Heart right ventricle (tissue), 16 donors: ENCODE measurements at regions of chr2 and their contacts with region 1.

Region 1: DNA sequence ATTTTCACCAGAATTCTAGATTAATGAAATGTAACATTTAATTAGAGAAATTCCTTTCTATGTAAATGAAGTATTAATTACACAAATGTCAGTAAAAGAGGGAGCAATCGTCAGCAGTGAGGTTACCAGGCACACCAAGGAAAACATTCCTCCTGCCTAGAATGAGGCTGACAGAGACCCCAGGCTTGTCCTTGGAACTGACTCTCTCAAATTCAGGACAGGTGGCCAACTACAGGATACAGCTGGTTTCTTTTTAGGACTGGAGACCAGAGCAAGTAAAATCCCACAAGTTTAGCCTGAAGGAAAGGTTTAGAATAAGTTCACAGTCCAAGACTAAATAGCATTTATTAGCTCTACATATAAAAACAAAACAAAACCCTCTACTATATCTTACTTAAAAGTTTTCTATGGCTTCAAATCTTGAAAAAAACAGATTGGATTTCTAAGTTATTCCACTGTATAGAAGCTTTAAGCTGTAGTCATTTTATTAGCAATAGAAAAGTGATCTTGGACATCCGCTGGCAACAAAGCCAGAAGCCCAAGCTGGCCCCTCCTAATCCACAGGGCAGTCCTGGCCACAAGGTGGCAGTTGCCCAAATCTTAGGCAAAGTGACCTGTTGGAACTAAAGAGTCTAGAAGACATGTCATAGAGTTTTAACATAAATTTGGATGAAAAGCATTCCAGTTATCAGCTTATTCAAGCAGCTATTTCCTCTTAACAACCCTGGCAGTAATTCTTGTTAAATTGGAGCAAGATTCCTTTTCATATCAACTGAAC is 81.0 kb downstream of the SP3 start:
- DNase-seq: peak; percentile 47 to 48
- ATAC-seq: peak in 7 of 8 donors; percentile 42 to 81 (median 70)
- H3K4me3 ChIP-seq: no peak overlapping the region
- H3K27ac ChIP-seq: no peak overlapping the region
- H3K4me1 ChIP-seq: peaks cover 0 to 14% (median 6%) of the 10 kb centered on the region in 9 donors
- H3K27me3 ChIP-seq: peaks cover 0 to 3% (median 0%) of the 10 kb centered on the region in 7 donors
- CTCF ChIP-seq: peak; percentile 28 to 80 (median 70)

Region 2: GRCh38 chr2:172516299-172516698 is 1367.9 kb before region 1 on chr2:
- intact Hi-C with region 1: loop called in 1 of 10 experiments (anchors 5 kb)
- DNase-seq: no peak
- ATAC-seq: no peak
- H3K4me3 ChIP-seq: no peak overlapping the region
- H3K27ac ChIP-seq: no peak overlapping the region
- H3K4me1 ChIP-seq: no peaks in the 10 kb centered on the region
- H3K27me3 ChIP-seq: no peaks in the 10 kb centered on the region
- CTCF ChIP-seq: no peak

Region 3: DNA sequence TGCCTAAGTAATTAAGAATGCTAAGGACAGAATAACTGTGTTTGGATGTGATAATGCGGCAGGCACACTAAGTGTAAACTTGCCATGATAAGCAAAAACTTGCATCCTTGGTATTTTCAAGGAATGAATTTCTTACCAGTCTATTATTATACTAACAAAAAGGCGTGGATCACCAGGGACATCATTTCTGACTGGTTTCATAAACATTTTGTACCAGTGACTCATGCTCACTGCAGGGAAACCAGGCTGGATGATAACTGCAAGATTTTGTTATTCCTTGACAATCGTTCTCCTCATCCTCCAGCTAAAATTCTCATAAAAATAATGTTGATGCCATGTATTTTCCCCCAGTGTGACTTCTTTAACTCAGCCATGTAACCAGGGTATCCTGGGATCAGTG is 240.1 kb before region 1 on chr2:
- intact Hi-C with region 1: no loop called
- DNase-seq: no peak
- ATAC-seq: no peak
- H3K4me3 ChIP-seq: no peak overlapping the region
- H3K27ac ChIP-seq: no peak overlapping the region
- H3K4me1 ChIP-seq: no peaks in the 10 kb centered on the region
- H3K27me3 ChIP-seq: no peaks in the 10 kb centered on the region
- CTCF ChIP-seq: no peak

Region 4: GRCh38 chr2:174051741-174052583 is 167.7 kb after region 1 on chr2:
- intact Hi-C with region 1: loop called in 6 of 10 experiments (anchors 5 to 10 kb)
- DNase-seq: no peak
- ATAC-seq: peak; percentile 70 to 93 (median 80)
- H3K4me3 ChIP-seq: peak overlapping the region in 1 of 10 donors; percentile 3
- H3K27ac ChIP-seq: peak overlapping the region in 5 of 10 donors; percentile 16 to 47 (median 39)
- H3K4me1 ChIP-seq: peaks cover 0 to 30% (median 16%) of the 10 kb centered on the region in 9 donors
- H3K27me3 ChIP-seq: no peaks in the 10 kb centered on the region
- CTCF ChIP-seq: peak in 3 of 9 donors; percentile 10 to 16 (median 15)